ENCODE measurements at regions of chr19 and their contacts with region 1.

Region 1: DNA sequence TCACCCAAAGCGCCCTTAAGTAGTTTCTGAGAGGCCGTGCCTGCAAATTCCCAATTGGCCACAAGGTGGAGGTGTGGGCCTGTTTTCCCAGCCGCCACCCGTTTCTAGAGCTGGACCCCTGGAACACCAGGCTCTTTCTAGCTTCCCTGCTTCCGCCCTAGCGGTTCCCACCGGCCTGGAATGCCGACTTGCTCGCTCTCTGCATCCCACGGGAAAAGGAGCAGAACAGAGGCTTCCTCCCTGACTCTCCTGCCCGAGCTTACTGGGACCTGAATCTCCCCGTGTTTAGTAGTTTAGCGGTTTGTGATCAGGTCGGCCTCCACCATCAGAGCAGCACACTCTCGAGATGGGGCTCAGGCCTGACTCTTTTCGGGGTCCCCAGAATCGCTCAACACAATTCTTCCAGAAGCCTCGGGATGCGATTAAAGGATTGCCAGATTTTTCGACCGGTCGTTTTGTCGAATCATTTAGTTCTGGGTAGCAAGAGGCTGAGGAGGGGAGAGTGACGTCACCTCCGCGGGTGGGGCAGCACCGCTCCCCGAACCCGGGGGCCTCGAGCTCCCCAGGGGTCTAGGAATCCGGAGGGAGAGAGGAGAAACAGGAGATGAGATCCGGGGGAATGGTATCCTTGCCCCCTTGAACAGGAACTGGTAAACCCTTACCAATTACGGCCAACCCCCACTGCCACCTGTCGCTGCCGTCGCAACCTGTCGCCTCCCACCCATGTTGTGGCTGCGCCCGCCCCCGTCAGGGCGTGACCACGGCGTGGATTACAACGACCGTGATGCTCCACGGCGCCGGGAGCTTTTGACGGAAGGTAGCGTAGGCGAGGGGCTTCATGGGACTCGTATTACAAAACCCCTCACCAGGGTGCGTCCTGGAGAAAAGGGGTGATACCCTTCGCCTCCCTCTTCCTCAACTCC is 8.0 kb downstream of the NAPSA start:
- DNase-seq: peak; percentile 70
- CTCF ChIP-seq: peak; percentile 70

Region 2: GRCh38 chr19:50147462-50148423 is 209.7 kb before region 1 on chr19:
- CTCF ChIA-PET with region 1: no interaction called
- POLR2A ChIA-PET with region 1: no interaction called
- DNase-seq: peak; percentile 47
- CTCF ChIP-seq: peak; percentile 19

Region 3: DNA sequence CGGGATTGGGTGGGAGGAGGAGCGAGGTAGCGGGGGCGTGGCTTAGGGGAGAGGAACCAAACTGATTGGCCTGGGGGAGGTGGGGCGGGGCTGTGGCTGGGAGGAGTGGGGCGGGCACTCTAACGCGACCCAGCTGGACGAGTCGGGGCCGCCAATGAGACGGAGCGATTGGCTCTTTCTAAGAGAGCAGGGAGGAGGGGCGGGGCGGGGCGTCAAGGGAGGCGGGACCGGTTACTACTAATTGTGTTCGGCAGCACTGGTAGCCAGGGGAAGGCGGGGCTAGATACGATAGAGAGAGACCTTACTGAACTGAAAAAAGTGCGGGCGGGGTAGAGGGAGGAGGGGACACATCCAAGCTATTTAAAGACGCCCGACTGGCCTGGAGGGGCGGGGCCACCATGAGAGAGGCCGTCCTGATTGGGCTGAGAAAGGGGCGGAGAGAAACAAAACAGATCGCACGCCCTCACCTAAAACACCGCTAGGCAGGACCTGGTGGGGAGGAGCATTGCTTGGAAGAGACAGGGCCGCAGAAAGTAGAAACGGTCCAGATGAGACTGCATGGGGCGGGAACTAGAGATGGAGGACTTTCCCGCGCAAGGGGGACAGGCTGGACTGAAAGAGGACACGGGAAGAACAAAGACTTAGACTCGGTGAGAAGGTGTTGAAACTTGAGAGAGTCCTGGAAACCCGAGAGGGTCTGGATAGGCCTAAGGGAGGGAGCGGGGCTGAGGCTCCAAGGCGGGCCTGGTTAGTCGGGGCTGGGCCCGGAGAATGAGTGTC is 28.1 kb before region 1 on chr19 and contains the start of gene KCNC3:
- CTCF ChIA-PET with region 1: interaction called, 16 read pairs
- POLR2A ChIA-PET with region 1: interaction called, 6 read pairs
- DNase-seq: peak; percentile 98
- CTCF ChIP-seq: no peak

Region 4: DNA sequence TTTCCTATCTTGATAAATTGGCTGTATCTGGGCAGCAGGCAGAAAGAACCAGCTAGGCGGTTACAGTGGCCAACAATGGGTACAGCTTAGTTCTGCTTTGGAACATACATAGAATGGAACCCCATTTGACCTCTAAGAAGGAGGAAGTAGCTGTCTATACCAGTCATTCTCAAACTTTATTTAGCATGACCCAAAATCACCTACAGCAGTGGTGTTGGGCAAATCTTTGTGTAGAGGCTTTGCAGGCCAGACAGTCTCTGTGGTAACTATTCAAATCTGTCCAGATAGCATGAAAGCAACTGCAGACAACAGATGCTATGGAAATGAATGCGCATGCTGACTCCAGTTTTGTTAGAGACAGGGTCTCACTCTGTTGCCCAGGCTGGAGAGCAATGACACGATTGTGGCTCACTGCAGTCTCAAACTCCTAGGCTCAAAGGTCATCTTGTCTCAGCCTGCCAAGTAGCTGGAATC is 16.3 kb before region 1 on chr19:
- CTCF ChIA-PET with region 1: interaction called, 22 read pairs
- POLR2A ChIA-PET with region 1: interaction called, 5 read pairs
- DNase-seq: peak; percentile 58
- CTCF ChIP-seq: no peak

Region 5: DNA sequence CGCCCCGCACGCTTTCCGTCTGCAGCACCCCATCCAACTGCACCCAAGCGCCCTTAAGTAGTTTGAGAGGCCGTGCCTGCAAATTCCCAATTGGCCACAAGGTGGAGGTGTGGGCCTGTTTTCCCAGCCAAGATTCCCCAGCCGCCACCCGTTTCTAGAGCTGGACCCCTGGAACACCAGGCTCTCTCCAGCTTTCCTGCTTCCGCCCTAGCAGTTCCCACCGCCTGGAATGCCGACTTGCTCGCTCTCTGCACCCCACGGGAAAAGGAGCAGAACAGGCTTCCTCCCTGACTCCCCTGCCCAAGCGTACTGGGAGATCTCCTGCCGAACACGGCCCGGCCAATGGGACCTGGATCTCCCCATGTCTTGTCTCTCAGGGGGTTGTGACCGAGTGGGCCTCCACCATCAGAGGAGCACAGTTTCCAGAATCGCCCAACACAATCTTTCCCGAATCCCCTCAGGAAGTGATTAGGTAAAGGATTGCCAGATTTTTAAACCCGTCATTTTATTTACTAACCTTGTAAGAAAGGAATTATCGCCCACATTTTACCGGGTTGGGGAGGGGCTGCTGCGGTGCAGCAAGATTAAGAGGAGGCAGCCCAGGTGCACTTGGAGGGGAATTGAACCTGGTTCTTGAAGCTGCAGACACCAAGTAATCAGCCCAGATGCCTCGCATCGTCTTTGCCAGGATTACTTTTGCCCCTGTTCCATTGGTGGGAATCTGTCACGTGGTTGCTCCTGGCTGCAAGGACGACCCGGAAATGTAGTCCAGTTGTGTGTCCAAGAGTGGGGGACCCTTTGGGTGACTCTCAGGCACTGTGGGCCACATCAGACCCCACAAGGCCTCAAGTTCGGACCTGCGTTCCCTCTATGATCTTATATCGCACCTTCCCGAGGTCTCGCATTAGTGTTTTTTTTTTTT is 11.5 kb after region 1 on chr19:
- CTCF ChIA-PET with region 1: interaction called, 29 read pairs
- POLR2A ChIA-PET with region 1: no interaction called
- DNase-seq: peak; percentile 84
- CTCF ChIP-seq: peak; percentile 86

Region 6: GRCh38 chr19:50414864-50415660 is 57.6 kb after region 1 on chr19:
- CTCF ChIA-PET with region 1: interaction called, 12 read pairs
- POLR2A ChIA-PET with region 1: no interaction called
- DNase-seq: peak; percentile 90
- CTCF ChIP-seq: peak; percentile 96

Region 7: GRCh38 chr19:50423295-50424113 is 66.1 kb after region 1 on chr19:
- CTCF ChIA-PET with region 1: interaction called, 10 read pairs
- POLR2A ChIA-PET with region 1: no interaction called
- DNase-seq: no peak
- CTCF ChIP-seq: no peak

Region 8: GRCh38 chr19:50461066-50461875 is 103.8 kb after region 1 on chr19:
- CTCF ChIA-PET with region 1: interaction called, 25 read pairs
- POLR2A ChIA-PET with region 1: interaction called, 3 read pairs
- DNase-seq: peak; percentile 88
- CTCF ChIP-seq: peak; percentile 81

Region 9: DNA sequence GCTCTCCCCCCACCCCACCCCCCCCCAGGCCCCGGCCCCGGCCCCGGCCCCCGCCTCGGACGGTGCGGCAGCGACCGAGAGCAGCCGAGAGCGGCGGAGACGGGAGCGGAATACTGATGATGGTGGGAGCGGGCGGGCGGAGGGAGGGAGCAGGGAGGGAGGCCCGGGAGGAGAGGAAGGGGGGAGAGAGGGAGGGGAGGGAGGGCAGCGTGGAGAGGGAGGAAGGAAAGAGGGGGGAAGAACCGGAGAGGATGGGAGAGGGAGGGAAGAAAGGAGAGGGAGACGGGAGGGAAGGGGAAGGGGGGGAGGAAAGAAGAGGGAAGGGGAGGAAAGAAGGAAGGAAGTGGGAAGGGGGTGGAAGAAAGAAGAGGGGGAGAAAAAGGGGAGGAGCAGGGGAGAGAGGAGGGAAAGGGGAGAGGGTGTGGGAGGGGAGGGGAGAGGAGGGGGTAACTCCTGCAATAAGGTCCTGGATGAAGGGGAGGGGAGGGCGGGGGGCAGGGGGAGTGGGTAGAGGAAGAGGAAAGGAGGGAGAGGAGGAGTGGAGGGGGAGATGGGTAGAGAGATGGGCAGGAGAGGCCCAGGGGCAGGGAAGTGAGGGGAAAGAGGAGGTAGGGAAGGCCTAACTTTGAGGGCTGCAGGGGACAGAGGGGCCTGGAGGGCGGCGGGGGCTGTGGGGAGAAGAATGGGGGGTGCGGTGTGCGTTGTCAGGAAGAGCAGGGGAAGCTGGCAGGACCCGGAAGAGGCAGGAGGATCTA is 211.1 kb after region 1 on chr19 and contains the start of gene LRRC4B:
- CTCF ChIA-PET with region 1: no interaction called
- POLR2A ChIA-PET with region 1: no interaction called
- DNase-seq: no peak
- CTCF ChIP-seq: no peak

Measured in GM10248 (cell line).